Activated B cell treated with CpG ODN at 0.5 μM for 24 hours (primary cell): ENCODE measurements at regions of chr10 and their contacts with region 1.

Region 1: GRCh38 chr10:119750391-119751230 is 24.8 kb downstream of the INPP5F start:
- DNase-seq: no peak
- ATAC-seq: peak; percentile 96
- H3K4me3 Mint-ChIP-seq: peak overlapping the region; percentile 69
- H3K27ac Mint-ChIP-seq: peak overlapping the region; percentile 86
- H3K4me1 Mint-ChIP-seq: peaks cover 43% of the 10 kb centered on the region
- H3K27me3 Mint-ChIP-seq: no peaks in the 10 kb centered on the region
- CTCF ChIP-seq: peak; percentile 38

Region 2: GRCh38 chr10:119705434-119705831 is 45.2 kb before region 1 on chr10:
- CTCF ChIA-PET with region 1: interaction called, 7 read pairs
- POLR2A ChIA-PET with region 1: interaction called, 14 read pairs
- intact Hi-C with region 1: loop called (anchors 1 kb)
- DNase-seq: peak; percentile 31
- ATAC-seq: peak; percentile 25
- H3K4me3 Mint-ChIP-seq: peak overlapping the region; percentile 59
- H3K27ac Mint-ChIP-seq: peak overlapping the region; percentile 97
- H3K4me1 Mint-ChIP-seq: peaks cover 95% of the 10 kb centered on the region
- H3K27me3 Mint-ChIP-seq: no peaks in the 10 kb centered on the region
- CTCF ChIP-seq: no peak

Region 3: GRCh38 chr10:119737827-119738226 is 12.8 kb before region 1 on chr10:
- CTCF ChIA-PET with region 1: interaction called, 11 read pairs
- POLR2A ChIA-PET with region 1: no interaction called
- intact Hi-C with region 1: no loop called
- DNase-seq: no peak
- ATAC-seq: no peak
- H3K4me3 Mint-ChIP-seq: no peak overlapping the region
- H3K27ac Mint-ChIP-seq: no peak overlapping the region
- H3K4me1 Mint-ChIP-seq: peaks cover 57% of the 10 kb centered on the region
- H3K27me3 Mint-ChIP-seq: no peaks in the 10 kb centered on the region
- CTCF ChIP-seq: no peak

Region 4: DNA sequence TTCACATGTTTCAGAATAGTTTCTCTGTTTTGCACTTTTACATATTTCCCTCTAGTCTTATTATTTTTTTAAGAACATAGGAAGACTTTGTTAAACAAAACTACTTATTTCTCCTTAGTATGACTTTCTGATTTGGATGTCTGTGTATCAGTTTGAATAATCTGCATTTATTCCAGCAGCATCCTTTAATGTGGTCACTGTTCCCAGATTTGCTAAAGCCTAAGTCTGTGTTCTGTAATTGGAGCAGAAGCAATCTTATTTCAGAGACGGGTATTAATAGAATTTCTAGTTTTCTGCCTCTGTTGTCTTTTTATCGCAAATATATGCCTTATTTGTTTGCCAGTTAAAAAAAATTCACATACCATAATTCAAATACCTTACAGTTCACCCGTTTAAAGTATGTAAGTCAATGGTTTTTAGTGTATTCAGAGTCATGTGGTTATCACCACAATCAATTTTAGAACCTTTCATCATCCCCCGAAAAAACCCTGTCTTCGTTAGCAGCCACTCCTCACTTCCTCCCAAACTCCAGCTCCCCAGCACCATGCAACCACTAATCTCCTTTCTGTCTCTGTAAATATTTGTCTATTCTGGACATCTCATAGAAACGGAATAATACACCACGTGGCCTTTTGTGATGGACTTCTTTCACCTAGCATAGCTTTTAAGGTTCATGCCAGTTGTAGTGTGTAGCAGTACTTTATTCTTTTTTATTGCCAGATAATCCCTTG is 33.9 kb after region 1 on chr10:
- CTCF ChIA-PET with region 1: interaction called, 11 read pairs
- POLR2A ChIA-PET with region 1: no interaction called
- intact Hi-C with region 1: loop called (anchors 1 kb)
- DNase-seq: no peak
- ATAC-seq: peak; percentile 54
- H3K4me3 Mint-ChIP-seq: peak overlapping the region; percentile 64
- H3K27ac Mint-ChIP-seq: peak overlapping the region; percentile 77
- H3K4me1 Mint-ChIP-seq: peaks cover 53% of the 10 kb centered on the region
- H3K27me3 Mint-ChIP-seq: no peaks in the 10 kb centered on the region
- CTCF ChIP-seq: no peak

Region 5: GRCh38 chr10:119859420-119860258 is 109.0 kb after region 1 on chr10:
- CTCF ChIA-PET with region 1: interaction called, 61 read pairs
- POLR2A ChIA-PET with region 1: no interaction called
- intact Hi-C with region 1: loop called (anchors 1 kb)
- DNase-seq: no peak
- ATAC-seq: peak; percentile 50
- H3K4me3 Mint-ChIP-seq: no peak overlapping the region
- H3K27ac Mint-ChIP-seq: no peak overlapping the region
- H3K4me1 Mint-ChIP-seq: peaks cover 30% of the 10 kb centered on the region
- H3K27me3 Mint-ChIP-seq: no peaks in the 10 kb centered on the region
- CTCF ChIP-seq: peak; percentile 46

Region 6: GRCh38 chr10:120156614-120157274 is 406.1 kb after region 1 on chr10:
- CTCF ChIA-PET with region 1: no interaction called
- POLR2A ChIA-PET with region 1: no interaction called
- intact Hi-C with region 1: no loop called
- DNase-seq: no peak
- ATAC-seq: no peak
- H3K4me3 Mint-ChIP-seq: no peak overlapping the region
- H3K27ac Mint-ChIP-seq: no peak overlapping the region
- H3K4me1 Mint-ChIP-seq: no peaks in the 10 kb centered on the region
- H3K27me3 Mint-ChIP-seq: peaks cover 3% of the 10 kb centered on the region
- CTCF ChIP-seq: no peak

Region 7: GRCh38 chr10:120336911-120337540 is 586.4 kb after region 1 on chr10:
- CTCF ChIA-PET with region 1: interaction called, 19 read pairs
- POLR2A ChIA-PET with region 1: no interaction called
- intact Hi-C with region 1: loop called (anchors 1 kb)
- DNase-seq: peak; percentile 35
- ATAC-seq: no peak
- H3K4me3 Mint-ChIP-seq: no peak overlapping the region
- H3K27ac Mint-ChIP-seq: no peak overlapping the region
- H3K4me1 Mint-ChIP-seq: no peaks in the 10 kb centered on the region
- H3K27me3 Mint-ChIP-seq: no peaks in the 10 kb centered on the region
- CTCF ChIP-seq: peak; percentile 93